GM18951 (cell line): ENCODE measurements at regions of chr1 and their contacts with region 1.

Region 1: GRCh38 chr1:103180660-103181059 is 72.3 kb upstream of the COL11A1 start:
- POLR2A ChIP-seq: no peak

Region 2: GRCh38 chr1:102365071-102365470 is 815.6 kb before region 1 on chr1:
- in situ Hi-C with region 1: loop called (anchors 10 kb)
- POLR2A ChIP-seq: no peak